ENCODE measurements at regions of chr6 and their contacts with region 1.

Region 1: DNA sequence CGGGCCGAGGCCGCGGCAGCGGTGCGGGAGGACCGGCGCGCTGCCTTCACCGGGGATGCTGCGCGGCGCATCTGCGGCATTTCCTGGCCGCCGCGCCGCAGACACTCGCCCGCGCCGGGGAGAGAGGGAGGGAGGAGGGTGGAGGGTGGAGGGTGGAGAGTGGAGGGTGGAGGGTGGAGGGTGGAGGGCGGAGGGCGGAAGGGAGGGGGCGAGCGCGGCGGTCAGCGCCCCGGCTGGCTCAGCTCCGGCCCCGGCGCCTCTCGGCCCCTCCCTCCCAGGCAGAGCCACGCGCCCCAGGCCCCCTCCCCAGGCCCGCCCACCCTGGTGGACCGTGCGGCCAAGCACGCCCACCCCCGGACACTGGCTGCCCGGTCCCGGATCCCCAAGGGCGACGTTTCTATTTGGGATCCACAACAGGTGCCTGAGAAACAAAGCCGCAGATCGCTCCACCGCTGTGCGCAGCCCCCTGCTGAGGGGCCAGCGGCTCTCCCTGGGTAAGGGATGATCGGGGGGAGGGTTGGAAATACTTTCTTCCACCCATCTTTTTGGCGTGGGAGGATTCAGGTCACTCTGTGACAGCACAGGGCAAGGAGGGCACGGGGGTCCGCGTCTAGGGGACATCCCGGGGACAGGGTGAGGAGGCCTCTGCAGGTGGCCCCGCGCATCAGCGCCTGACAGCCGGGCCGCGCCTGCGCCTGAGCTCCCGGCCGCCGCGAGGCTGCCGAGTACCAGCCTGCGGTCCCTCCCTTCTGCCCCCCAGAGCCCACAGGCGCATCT is 111.1 kb upstream of the BEND6 start:
- DNase-seq: peak; percentile 87
- CTCF ChIP-seq: peak; percentile 52

Region 2: GRCh38 chr6:56764081-56764566 is 79.6 kb before region 1 on chr6:
- CTCF ChIA-PET with region 1: interaction called, 10 read pairs
- POLR2A ChIA-PET with region 1: no interaction called
- DNase-seq: peak; percentile 40
- CTCF ChIP-seq: no peak

Region 3: GRCh38 chr6:56821005-56821432 is 22.7 kb before region 1 on chr6:
- CTCF ChIA-PET with region 1: interaction called, 10 read pairs
- POLR2A ChIA-PET with region 1: no interaction called
- DNase-seq: no peak
- CTCF ChIP-seq: no peak

Region 4: DNA sequence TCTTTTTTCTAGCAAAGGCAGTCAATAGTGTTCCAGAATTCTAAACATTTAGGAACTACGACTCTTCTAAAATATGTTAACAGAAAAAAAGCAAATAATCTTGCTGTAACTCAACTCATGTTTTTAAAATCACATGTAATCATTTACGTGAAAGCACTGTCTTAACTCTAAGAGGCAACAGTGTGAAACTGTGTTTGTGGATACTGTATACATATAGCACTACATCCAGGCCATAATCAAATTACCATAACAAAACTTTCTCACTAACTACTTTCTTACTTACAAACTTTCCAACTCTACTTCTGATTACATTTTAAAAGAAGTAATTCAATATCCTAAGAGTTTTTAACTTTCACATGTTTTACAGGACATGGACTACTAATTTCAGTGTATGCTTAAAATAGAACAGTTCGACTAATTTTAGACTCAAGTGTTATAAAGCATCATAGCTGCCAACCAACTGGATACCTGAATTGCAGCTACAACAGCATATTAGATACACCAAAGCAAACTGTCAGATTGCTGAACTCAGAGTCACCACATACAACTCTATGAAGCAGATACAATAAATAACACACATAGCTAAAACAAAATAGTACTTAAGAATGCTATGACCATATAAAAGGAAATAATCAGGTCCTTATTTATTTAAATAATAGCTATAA is 10.5 kb before region 1 on chr6:
- CTCF ChIA-PET with region 1: interaction called, 18 read pairs
- POLR2A ChIA-PET with region 1: no interaction called
- DNase-seq: no peak
- CTCF ChIP-seq: no peak